ENCODE measurements at regions of chr5 and their contacts with region 1.

Region 1: DNA sequence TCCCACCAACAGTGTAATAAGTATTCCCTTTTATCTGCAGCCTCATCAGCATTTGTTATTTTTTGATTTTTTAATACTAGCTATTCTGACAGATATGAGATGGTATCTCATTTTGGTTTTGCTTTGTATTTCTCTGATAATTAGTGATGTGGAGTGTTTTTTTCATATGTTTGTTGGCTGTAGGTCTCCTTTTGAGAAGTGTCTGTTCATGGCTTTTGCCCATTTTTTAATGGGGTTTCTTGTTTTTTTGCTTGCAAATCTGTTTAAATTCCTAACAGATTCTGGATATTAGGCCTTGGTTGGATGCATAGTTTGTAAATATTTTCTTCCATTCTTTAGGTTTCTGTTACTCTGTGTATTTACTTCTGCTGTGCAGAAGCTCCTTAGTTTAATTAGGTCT is 445.4 kb upstream of the DAB2 start:
- DNase-seq: no peak
- H3K4me3 ChIP-seq: no peak overlapping the region
- H3K27ac ChIP-seq: no peak overlapping the region
- H3K4me1 ChIP-seq: no peaks in the 10 kb centered on the region
- H3K27me3 ChIP-seq: no peaks in the 10 kb centered on the region
- CTCF ChIP-seq: no peak
- POLR2A ChIP-seq: no peak

Region 2: DNA sequence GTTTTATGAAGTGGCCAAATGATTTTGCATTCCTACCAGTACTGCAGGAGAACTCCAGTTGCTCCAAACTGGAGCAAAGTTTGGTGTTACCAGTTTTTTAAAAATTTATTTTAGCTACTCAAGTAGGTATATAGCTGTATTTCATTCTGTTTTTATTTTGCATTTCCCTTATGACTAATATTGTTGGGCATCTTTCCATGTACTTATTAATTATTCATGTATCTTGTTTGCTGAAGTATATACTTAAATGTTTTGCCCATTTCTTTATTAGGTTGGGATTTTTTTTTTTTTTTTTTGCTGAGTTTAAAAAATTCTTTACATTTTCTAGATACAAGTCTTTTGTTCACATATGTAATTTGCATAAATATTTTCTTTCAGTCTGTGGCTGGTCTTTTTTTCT is 58.8 kb before region 1 on chr5:
- intact Hi-C with region 1: no loop called
- DNase-seq: no peak
- H3K4me3 ChIP-seq: no peak overlapping the region
- H3K27ac ChIP-seq: no peak overlapping the region
- H3K4me1 ChIP-seq: no peaks in the 10 kb centered on the region
- H3K27me3 ChIP-seq: no peaks in the 10 kb centered on the region
- CTCF ChIP-seq: no peak
- POLR2A ChIP-seq: no peak

Region 3: DNA sequence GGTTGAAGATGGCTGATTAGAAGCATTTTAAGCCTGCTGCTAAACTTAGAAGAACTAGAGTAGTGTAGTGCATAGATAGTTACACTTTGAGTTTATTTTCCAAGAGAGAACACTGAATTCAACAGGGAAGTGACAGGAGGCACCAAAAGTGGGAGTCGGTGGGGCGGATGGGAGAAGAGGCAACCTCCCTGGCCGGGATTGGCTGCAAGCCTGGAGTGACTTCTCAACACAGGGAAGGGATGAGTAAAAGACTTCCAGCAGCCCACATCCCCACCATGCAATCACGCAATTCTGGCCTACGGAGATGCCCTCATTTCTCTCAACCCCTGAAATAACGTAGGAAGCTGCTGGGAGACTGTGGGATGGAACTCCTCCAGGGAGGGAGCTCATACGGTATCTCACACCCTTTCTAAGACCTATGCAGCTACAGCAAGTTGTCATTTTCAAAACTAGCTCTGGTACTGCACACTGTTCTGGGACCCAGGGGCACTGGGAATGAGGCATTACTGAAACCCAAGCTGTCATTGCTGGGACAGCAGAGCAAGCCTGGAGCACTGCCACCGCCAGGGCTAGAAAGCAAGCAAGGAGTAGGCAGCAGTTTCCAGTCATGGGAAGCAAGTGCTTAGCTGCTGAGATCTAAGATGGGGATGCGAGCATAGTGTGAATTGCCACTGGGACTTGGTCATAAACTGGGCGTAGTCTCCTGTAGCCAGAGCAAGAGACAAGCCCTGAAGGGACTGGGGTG is 478.0 kb after region 1 on chr5:
- intact Hi-C with region 1: loop called (anchors 5 kb)
- DNase-seq: no peak
- H3K4me3 ChIP-seq: no peak overlapping the region
- H3K27ac ChIP-seq: no peak overlapping the region
- H3K4me1 ChIP-seq: no peaks in the 10 kb centered on the region
- H3K27me3 ChIP-seq: no peaks in the 10 kb centered on the region
- CTCF ChIP-seq: no peak
- POLR2A ChIP-seq: no peak